Activated T-helper 2 cell treated with anti-CD3 and anti-CD28 coated beads, Interferon-gamma antibody, Interleukin-2, Interleukin-4, amounts not matched to agents 10 μg/mL and 5 μg/mL and 100 μg/mL, durations not matched to agents 14 hours and 24 hours and 36 hours (primary cell): ENCODE measurements at regions of chr7 and their contacts with region 1.

Region 1: DNA sequence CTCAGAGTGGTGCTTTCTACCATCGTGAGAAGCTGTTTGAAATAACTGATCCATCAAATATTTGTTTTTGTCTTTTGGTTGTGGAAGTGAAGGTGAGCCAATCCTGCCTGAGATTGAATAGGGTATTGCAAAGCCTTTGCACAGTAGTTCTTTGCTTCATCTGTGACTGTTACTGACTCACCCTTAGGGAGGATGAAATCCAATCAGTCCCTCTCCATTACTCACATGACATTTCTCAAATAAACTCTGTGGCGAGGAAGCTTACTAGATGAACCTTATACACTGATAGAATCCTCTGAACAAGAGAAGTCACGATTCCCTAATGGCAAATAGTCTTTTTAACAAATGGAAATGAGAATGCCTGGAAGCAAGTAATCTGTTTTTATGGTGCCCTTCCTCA is 31.9 kb downstream of the HEPACAM2 start:
- DNase-seq: no peak
- H3K4me3 Mint-ChIP-seq: no peak overlapping the region
- H3K27ac Mint-ChIP-seq: no peak overlapping the region
- H3K4me1 Mint-ChIP-seq: no peaks in the 10 kb centered on the region
- H3K27me3 Mint-ChIP-seq: peaks cover 46% of the 10 kb centered on the region

Region 2: DNA sequence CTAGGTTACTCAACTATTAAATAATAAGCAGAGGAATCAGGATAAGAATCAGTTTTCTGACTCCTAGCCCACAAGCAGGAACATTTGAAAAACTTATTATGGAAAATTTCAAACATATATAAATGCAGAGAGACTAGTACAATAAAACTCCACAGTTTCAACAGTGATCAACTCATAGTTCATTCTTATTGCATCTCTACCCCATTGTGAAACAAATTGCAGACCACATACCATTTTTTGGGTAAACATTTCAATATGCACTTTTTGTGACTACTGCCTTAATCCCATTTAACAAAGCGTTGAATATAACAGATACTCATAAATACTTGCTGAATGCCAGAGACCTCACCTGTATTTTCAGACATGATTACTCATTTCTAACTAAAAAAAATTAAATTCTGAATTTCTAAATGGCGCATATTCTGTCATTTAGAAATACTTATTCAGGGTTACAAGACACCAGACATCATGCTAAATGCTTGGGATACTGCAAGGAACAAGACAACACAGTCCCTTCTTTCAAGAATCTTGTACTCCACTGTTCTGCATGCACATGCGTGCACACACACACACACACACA is 369.4 kb before region 1 on chr7:
- intact Hi-C with region 1: no loop called
- DNase-seq: no peak
- H3K4me3 Mint-ChIP-seq: peak overlapping the region; percentile 49
- H3K27ac Mint-ChIP-seq: peak overlapping the region; percentile 70
- H3K4me1 Mint-ChIP-seq: peaks cover 67% of the 10 kb centered on the region
- H3K27me3 Mint-ChIP-seq: no peaks in the 10 kb centered on the region

Region 3: DNA sequence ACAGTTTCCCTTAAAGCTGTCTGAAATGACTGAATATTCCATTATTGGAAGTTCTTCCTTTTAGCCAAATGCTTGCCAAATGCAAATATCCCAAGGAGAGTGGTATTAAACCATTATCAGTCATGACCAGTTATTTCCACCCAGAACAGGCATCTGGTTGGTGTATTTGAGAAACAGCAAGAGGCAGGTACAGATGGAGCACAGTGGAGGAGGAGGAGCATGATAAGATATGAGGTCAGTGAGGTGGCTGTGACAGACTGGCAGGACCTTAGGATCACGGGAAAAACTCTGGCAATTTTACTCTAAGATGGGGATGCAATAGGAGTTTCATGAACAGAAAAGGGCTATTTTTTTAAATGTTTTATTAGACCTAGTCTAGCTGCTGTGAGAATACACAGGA is 25.5 kb after region 1 on chr7:
- intact Hi-C with region 1: loop called (anchors 1 kb)
- DNase-seq: no peak
- H3K4me3 Mint-ChIP-seq: no peak overlapping the region
- H3K27ac Mint-ChIP-seq: no peak overlapping the region
- H3K4me1 Mint-ChIP-seq: no peaks in the 10 kb centered on the region
- H3K27me3 Mint-ChIP-seq: peaks cover 34% of the 10 kb centered on the region

Region 4: GRCh38 chr7:93245525-93246432 is 51.4 kb after region 1 on chr7:
- intact Hi-C with region 1: no loop called
- DNase-seq: no peak
- H3K4me3 Mint-ChIP-seq: no peak overlapping the region
- H3K27ac Mint-ChIP-seq: no peak overlapping the region
- H3K4me1 Mint-ChIP-seq: no peaks in the 10 kb centered on the region
- H3K27me3 Mint-ChIP-seq: no peaks in the 10 kb centered on the region